ENCODE measurements at regions of chr9 and their contacts with region 1.

Region 1: DNA sequence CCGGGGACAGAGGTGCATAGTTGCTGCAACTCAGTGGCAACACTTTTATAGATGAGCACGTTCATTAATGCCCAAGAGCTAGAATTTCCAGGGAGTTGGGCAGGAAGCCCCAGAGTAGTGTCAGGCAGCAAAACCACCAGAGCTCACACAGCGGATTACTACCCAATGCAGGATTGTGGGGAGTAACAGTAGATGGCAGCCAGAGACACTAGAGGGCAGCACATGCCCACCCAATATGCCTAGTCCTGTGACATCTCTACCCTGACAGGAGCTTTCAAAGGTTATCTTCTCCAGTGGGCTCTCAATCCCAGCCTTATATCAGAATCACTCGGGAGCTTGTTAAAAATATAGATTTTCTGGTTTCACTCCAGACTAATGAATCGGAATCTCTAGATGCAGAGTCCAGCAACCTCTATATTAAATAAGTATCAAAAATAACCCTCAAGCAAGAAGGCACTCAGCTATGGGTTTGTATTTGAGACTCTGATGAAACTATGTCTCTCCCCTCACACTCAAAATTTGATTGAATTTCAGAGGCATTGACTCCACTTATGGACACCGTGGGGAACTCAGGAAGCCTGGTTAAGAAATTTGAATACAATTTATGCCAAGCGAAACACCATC is 58.4 kb upstream of the PHF24 start:
- DNase-seq: peak; percentile 89
- H3K4me3 Mint-ChIP-seq: no peak overlapping the region
- H3K27ac Mint-ChIP-seq: no peak overlapping the region
- H3K4me1 Mint-ChIP-seq: no peaks in the 10 kb centered on the region
- H3K27me3 Mint-ChIP-seq: peaks cover 31% of the 10 kb centered on the region

Region 2: GRCh38 chr9:34690983-34691935 is 208.4 kb before region 1 on chr9 and contains the start of gene CCL19:
- CTCF ChIA-PET with region 1: no interaction called
- POLR2A ChIA-PET with region 1: no interaction called
- intact Hi-C with region 1: no loop called
- DNase-seq: no peak
- H3K4me3 Mint-ChIP-seq: no peak within 1 kb of the TSS
- H3K27ac Mint-ChIP-seq: no peak within 1 kb of the TSS
- H3K4me1 Mint-ChIP-seq: no peaks in the 10 kb centered on the region
- H3K27me3 Mint-ChIP-seq: no peaks in the 10 kb centered on the region
- total RNA-seq, gene CCL19: not detected

Region 3: GRCh38 chr9:34759432-34760134 is 140.1 kb before region 1 on chr9:
- CTCF ChIA-PET with region 1: interaction called, 11 read pairs
- POLR2A ChIA-PET with region 1: no interaction called
- intact Hi-C with region 1: no loop called
- DNase-seq: no peak
- H3K4me3 Mint-ChIP-seq: no peak overlapping the region
- H3K27ac Mint-ChIP-seq: no peak overlapping the region
- H3K4me1 Mint-ChIP-seq: peaks cover 2% of the 10 kb centered on the region
- H3K27me3 Mint-ChIP-seq: peaks cover 30% of the 10 kb centered on the region

Region 4: DNA sequence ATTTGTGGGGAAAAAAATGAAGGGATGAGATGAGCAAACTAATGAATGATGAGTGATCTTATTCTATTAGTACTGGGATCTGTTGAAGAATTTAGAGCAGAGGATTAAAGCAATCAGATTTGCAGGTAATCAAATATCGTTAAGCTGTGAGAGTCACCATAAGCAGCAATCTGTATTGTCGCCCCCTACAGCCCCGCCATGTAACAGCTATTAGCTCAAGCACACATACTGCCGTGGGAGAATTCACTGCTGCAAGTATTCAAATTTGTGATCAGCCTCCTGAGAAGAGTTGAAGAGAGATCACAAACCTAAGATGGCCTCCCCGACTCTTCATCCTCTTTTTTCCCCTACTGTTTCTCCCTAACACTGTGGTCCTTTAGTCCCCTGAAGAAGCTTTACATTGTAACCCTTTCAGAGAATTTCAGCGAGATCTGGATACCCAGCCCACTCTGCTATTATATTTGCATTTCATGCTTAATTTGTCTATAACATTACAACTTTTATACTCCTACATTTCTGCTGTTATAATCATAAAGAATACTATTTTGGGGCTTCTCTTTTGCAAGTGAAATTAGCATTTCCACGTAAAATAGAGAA is 30.0 kb after region 1 on chr9:
- CTCF ChIA-PET with region 1: interaction called, 18 read pairs
- POLR2A ChIA-PET with region 1: no interaction called
- intact Hi-C with region 1: no loop called
- DNase-seq: peak; percentile 58
- H3K4me3 Mint-ChIP-seq: no peak overlapping the region
- H3K27ac Mint-ChIP-seq: no peak overlapping the region
- H3K4me1 Mint-ChIP-seq: peaks cover 16% of the 10 kb centered on the region
- H3K27me3 Mint-ChIP-seq: peaks cover 22% of the 10 kb centered on the region

Region 5: GRCh38 chr9:34989003-34989945 is 89.6 kb after region 1 on chr9 and contains the start of gene DNAJB5:
- CTCF ChIA-PET with region 1: interaction called, 111 read pairs
- POLR2A ChIA-PET with region 1: no interaction called
- intact Hi-C with region 1: loop called (anchors 1 kb)
- DNase-seq: peak; percentile 99
- H3K4me3 Mint-ChIP-seq: peak within 1 kb of the TSS; percentile 89
- H3K27ac Mint-ChIP-seq: peak within 1 kb of the TSS; percentile 89
- H3K4me1 Mint-ChIP-seq: peaks cover 81% of the 10 kb centered on the region
- H3K27me3 Mint-ChIP-seq: no peaks in the 10 kb centered on the region
- total RNA-seq, gene DNAJB5: 11.5 to 12.0 TPM

Region 6: DNA sequence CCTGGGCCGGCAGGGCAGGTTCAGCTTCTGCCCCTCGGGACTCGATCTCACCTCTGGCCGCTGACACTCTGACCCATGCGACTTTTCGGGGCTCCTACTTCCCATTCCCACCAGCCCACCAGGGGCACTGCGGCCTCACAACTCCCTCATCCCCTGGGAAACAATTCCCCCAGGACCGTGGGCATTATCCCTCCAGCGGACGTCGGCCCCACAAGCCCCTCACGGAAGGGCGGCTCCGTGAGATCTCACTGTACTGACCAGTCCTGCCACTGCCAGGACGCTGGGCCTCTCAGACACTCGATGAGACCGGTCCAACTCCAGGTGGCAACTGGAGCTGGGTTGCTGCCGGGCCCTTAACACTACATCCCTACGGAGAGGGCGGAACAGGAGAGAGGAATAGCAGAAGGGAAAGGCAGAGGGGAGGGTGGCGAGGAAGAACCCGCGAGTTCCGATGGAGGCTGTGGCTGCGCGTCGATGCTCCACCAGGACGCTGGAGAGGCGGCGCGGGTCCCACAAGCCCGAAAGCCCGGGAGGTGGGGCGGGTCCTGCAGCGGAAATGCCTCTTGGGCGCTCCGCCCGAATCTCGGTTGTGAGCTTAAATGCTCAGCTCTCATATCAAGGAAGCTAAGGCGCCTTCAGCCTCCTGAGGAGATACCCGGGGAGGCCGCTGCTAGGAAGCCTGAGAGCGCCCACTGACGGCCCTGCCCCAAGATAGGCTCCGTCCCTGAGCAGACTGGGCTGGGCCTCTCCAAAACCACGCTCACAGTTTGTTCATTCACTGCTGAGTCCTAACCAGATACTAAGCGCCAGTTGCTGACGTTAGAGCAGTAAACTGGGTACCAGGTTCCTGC is 136.4 kb after region 1 on chr9:
- CTCF ChIA-PET with region 1: interaction called, 14 read pairs
- POLR2A ChIA-PET with region 1: no interaction called
- intact Hi-C with region 1: no loop called
- DNase-seq: peak; percentile 71
- H3K4me3 Mint-ChIP-seq: peak overlapping the region; percentile 36
- H3K27ac Mint-ChIP-seq: peak overlapping the region; percentile 18
- H3K4me1 Mint-ChIP-seq: peaks cover 9% of the 10 kb centered on the region
- H3K27me3 Mint-ChIP-seq: no peaks in the 10 kb centered on the region

Region 7: GRCh38 chr9:35096035-35096849 is 196.6 kb after region 1 on chr9 and contains the start of gene PIGO:
- CTCF ChIA-PET with region 1: interaction called, 31 read pairs
- POLR2A ChIA-PET with region 1: no interaction called
- intact Hi-C with region 1: loop called (anchors 1 kb)
- DNase-seq: peak; percentile 93
- H3K4me3 Mint-ChIP-seq: peak within 1 kb of the TSS; percentile 84
- H3K27ac Mint-ChIP-seq: peak within 1 kb of the TSS; percentile 93
- H3K4me1 Mint-ChIP-seq: peaks cover 27% of the 10 kb centered on the region
- H3K27me3 Mint-ChIP-seq: no peaks in the 10 kb centered on the region
- total RNA-seq, gene PIGO: 19.3 to 20.9 TPM

Region 8: GRCh38 chr9:35116898-35117551 is 217.4 kb after region 1 on chr9:
- CTCF ChIA-PET with region 1: interaction called, 5 read pairs
- POLR2A ChIA-PET with region 1: no interaction called
- intact Hi-C with region 1: loop called (anchors 5 kb)
- DNase-seq: peak; percentile 91
- H3K4me3 Mint-ChIP-seq: peak overlapping the region; percentile 81
- H3K27ac Mint-ChIP-seq: peak overlapping the region; percentile 91
- H3K4me1 Mint-ChIP-seq: peaks cover 33% of the 10 kb centered on the region
- H3K27me3 Mint-ChIP-seq: no peaks in the 10 kb centered on the region

Measured in activated CD4-positive, alpha-beta memory T cell treated with anti-CD3 and anti-CD28 coated beads for 36 hours (primary cell).